PC-3 (cell line): ENCODE measurements at regions of chr7 and their contacts with region 1.

Region 1: GRCh38 chr7:27605689-27606269 is 56.9 kb downstream of the HIBADH start:
- DNase-seq: peak; percentile 75
- ATAC-seq: peak; percentile 68
- H3K4me3 ChIP-seq: peak overlapping the region; percentile 50
- H3K27ac ChIP-seq: peak overlapping the region; percentile 91
- H3K4me1 ChIP-seq: peaks cover 30% of the 10 kb centered on the region
- H3K27me3 ChIP-seq: no peaks in the 10 kb centered on the region
- CTCF ChIP-seq: peak; percentile 62

Region 2: DNA sequence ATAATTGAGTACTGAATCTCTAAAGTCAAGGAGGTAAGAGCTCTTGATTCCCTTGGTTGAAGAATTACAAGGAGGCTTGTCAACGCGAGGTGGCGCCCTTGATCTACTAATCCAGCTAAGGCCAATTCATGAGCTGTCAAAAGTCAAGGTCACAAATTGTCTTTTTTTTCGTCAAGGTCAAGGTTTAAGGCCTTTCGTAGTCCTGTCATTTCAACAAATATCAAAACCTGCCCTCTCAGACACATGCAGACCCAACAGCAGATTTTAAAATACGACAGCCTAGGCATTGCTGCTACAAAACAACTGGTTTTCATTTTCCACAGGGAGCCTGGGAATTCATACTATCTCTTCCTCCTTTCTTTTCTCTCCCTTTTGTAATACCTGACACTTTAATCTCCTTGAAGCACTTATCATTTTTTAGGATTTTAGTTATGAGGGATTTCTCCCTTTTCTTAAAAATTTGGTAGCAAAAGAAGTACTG is 409.5 kb before region 1 on chr7:
- CTCF ChIA-PET with region 1: interaction called, 35 read pairs
- POLR2A ChIA-PET with region 1: no interaction called
- intact Hi-C with region 1: loop called (anchors 1 kb)
- DNase-seq: peak; percentile 89
- ATAC-seq: no peak
- H3K4me3 ChIP-seq: peak overlapping the region; percentile 91
- H3K27ac ChIP-seq: peak overlapping the region; percentile 21; the same call in 1 of the 2 replicates
- H3K4me1 ChIP-seq: peaks cover 14% of the 10 kb centered on the region
- H3K27me3 ChIP-seq: no peaks in the 10 kb centered on the region
- CTCF ChIP-seq: peak; percentile 91

Region 3: DNA sequence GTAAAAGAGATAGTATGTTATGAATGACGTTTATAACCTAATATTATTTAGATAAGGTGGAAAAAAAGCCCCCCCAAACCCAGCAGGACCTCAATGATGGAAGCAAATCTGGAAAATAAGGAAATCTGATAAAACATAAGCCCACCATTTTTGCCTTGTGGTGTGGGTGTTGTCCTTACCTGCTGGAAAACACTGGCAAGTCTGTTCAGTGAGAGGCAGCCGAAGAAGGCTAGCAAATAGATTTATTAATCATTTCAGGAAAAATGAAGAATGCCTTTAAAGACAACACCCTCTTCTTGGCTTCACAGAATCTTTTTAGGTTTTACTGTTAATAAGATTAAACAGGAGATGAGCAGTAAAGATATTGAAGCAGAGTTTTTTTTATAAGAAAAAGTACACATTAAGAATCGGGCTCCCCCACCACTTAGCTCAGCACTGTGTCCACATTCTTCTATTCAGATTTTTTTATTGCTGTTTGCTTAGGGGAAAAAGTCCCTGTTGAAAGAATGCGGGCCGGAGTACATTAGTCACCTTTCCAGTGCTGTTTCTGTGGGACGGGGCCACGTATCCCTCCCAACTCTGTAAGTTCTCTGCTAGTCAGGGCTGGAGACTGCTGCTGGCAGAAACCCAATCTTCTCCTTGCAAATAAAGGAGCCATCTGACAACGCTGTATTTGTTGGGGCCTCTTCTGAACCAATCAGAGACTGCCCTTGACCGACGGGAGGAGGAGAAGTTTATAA is 259.1 kb before region 1 on chr7:
- CTCF ChIA-PET with region 1: no interaction called
- POLR2A ChIA-PET with region 1: interaction called, 6 read pairs
- intact Hi-C with region 1: loop called (anchors 1 kb)
- DNase-seq: peak; percentile 99
- ATAC-seq: peak; percentile 91
- H3K4me3 ChIP-seq: peak overlapping the region; percentile 57
- H3K27ac ChIP-seq: peak overlapping the region; percentile 92
- H3K4me1 ChIP-seq: peaks cover 43% of the 10 kb centered on the region
- H3K27me3 ChIP-seq: no peaks in the 10 kb centered on the region
- CTCF ChIP-seq: no peak

Region 4: DNA sequence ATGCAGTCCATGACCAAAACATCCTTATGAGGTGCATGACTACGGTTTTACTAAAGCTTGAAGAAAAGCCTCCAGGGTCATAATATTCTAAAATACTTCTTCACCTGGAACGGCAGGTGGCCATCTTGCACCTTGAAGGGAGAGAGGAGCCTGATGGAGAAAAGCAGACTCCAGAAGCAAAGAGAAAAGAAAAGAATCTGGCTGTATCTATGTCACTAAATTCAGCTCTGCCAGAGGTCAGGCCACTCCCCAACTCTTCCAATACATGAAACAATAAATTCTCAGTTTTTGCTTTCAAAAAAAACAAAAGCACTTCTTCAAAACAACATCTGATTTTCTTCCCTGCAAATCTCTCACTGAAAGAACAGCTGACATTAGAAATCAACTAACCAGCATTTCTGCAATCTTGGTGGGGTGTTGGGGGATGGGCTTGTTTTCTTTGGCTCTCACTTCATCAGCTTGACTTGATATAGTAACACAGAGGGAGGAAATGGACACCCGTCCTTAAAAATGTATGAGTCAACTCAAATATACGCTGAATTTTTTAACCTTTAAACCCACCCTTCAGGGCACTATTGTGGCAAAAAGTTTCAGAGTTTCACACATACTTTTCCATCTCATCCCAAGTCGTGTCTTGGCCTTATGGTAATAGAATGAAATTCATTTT is 35.3 kb after region 1 on chr7:
- CTCF ChIA-PET with region 1: interaction called, 12 read pairs
- POLR2A ChIA-PET with region 1: interaction called, 4 read pairs
- intact Hi-C with region 1: loop called (anchors 2 kb)
- DNase-seq: peak; percentile 93
- ATAC-seq: peak; percentile 96
- H3K4me3 ChIP-seq: peak overlapping the region; percentile 50
- H3K27ac ChIP-seq: peak overlapping the region; percentile 84
- H3K4me1 ChIP-seq: peaks cover 33% of the 10 kb centered on the region
- H3K27me3 ChIP-seq: no peaks in the 10 kb centered on the region
- CTCF ChIP-seq: peak; percentile 38; the same call in 1 of the 2 replicates

Region 5: GRCh38 chr7:27677912-27678612 is 72.3 kb after region 1 on chr7:
- CTCF ChIA-PET with region 1: interaction called, 7 read pairs
- POLR2A ChIA-PET with region 1: no interaction called
- intact Hi-C with region 1: loop called (anchors 1 kb)
- DNase-seq: peak; percentile 95
- ATAC-seq: peak; percentile 96
- H3K4me3 ChIP-seq: peak overlapping the region; percentile 34; the same call in 1 of the 2 replicates
- H3K27ac ChIP-seq: peak overlapping the region; percentile 100
- H3K4me1 ChIP-seq: peaks cover 31% of the 10 kb centered on the region
- H3K27me3 ChIP-seq: no peaks in the 10 kb centered on the region
- CTCF ChIP-seq: no peak

Region 6: DNA sequence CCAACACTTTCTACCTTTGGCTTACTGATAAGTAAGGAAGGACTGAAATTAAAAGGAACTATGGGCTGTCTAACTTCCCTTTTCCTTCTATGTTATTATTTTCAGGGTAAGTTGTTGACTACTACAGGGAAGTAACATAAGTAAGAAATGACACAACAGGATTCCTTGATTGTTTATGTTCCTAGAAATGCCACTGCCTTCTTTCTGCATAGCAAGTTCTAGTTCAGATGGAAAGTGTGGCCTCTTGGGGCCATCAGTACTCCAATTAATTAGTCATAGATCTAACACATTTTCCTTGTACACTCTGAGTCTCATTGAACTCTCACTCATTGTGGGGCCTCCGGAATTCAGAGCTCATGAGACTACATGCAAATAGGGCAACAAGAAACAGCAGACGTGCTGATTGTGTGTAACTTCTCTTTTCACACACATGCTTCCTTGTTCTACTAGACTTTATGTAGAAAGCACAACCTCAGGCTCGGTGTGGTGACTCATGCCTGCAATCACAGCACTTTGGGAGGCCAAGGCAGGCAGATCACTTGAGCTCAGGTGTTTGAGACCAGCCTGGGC is 92.2 kb after region 1 on chr7:
- CTCF ChIA-PET with region 1: no interaction called
- POLR2A ChIA-PET with region 1: no interaction called
- intact Hi-C with region 1: no loop called
- DNase-seq: peak; percentile 28
- ATAC-seq: peak; percentile 43
- H3K4me3 ChIP-seq: no peak overlapping the region
- H3K27ac ChIP-seq: no peak overlapping the region
- H3K4me1 ChIP-seq: peaks cover 9% of the 10 kb centered on the region
- H3K27me3 ChIP-seq: no peaks in the 10 kb centered on the region
- CTCF ChIP-seq: no peak

Region 7: GRCh38 chr7:27739909-27740448 is 134.2 kb after region 1 on chr7 and contains the start of gene TAX1BP1:
- CTCF ChIA-PET with region 1: interaction called, 4 read pairs
- POLR2A ChIA-PET with region 1: interaction called, 5 read pairs
- intact Hi-C with region 1: loop called (anchors 10 kb)
- DNase-seq: peak; percentile 93
- ATAC-seq: peak; percentile 77
- H3K4me3 ChIP-seq: peak within 1 kb of the TSS; percentile 89
- H3K27ac ChIP-seq: peak within 1 kb of the TSS; percentile 71
- H3K4me1 ChIP-seq: peaks cover 40% of the 10 kb centered on the region
- H3K27me3 ChIP-seq: no peaks in the 10 kb centered on the region
- CTCF ChIP-seq: no peak
- total RNA-seq, gene TAX1BP1: 49.5 and 58.5 TPM in 2 replicates